ENCODE measurements at regions of chr1 and their contacts with region 1.

Region 1: GRCh38 chr1:115807723-115808122 is 33.2 kb downstream of the NHLH2 start:
- DNase-seq: peak; percentile 46 to 59
- ATAC-seq: peak; percentile 62

Region 2: DNA sequence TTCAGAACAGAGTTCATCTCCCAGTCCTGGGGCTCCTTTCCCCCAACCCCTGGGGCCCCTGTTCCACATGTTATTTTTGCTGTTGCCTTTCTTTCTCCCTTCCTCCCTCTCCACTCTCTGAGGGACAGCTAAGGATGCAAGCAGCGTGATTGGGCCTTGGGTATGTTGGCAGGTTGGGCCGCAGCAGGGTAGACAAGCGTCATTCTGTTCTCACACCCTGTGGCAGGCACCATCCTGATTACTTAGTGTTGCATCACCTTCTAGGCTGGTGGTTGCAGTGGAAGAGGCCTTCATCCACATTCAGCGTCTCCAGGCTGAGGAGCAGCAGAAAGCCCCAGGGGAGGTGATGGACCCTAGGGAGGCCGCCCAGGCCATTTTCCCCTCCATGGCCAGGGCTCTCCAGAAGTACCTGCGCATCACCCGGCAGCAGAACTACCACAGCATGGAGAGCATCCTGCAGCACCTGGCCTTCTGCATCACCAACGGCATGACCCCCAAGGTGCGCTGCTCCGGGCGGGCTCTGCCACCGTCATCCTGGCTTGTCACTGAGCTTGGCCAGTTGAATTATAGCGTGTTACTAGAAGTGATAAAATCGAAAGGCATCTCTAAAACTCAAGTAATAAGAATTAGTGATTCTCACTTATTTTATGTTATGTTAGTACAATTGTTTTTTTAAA is 122.6 kb before region 1 on chr1:
- intact Hi-C with region 1: no loop called
- DNase-seq: no peak
- ATAC-seq: no peak

Region 3: GRCh38 chr1:115977499-115978258 is 170.0 kb after region 1 on chr1:
- intact Hi-C with region 1: loop called in 1 of 2 experiments (anchors 2 kb)
- DNase-seq: peak; percentile 18 to 46
- ATAC-seq: peak; percentile 65